Colonic mucosa (tissue), 4 donors: ENCODE measurements at regions of chr6 and their contacts with region 1.

Region 1: GRCh38 chr6:134174672-134175198 is 122.3 kb upstream of the SLC2A12 start:
- DNase-seq: peak; percentile 96
- H3K4me3 ChIP-seq: peak overlapping the region; percentile 60
- H3K27ac ChIP-seq: peak overlapping the region; percentile 81
- H3K4me1 ChIP-seq: no peaks in the 10 kb centered on the region
- H3K27me3 ChIP-seq: no peaks in the 10 kb centered on the region
- CTCF ChIP-seq: no peak

Region 2: GRCh38 chr6:133991096-133991593 is 183.6 kb before region 1 on chr6:
- intact Hi-C with region 1: no loop called
- DNase-seq: no peak
- H3K4me3 ChIP-seq: no peak overlapping the region
- H3K27ac ChIP-seq: no peak overlapping the region
- H3K4me1 ChIP-seq: no peaks in the 10 kb centered on the region
- H3K27me3 ChIP-seq: no peaks in the 10 kb centered on the region
- CTCF ChIP-seq: no peak

Region 3: GRCh38 chr6:134002821-134003220 is 171.9 kb before region 1 on chr6:
- intact Hi-C with region 1: no loop called
- DNase-seq: no peak
- H3K4me3 ChIP-seq: no peak overlapping the region
- H3K27ac ChIP-seq: no peak overlapping the region
- H3K4me1 ChIP-seq: no peaks in the 10 kb centered on the region
- H3K27me3 ChIP-seq: no peaks in the 10 kb centered on the region
- CTCF ChIP-seq: no peak

Region 4: GRCh38 chr6:134117370-134117807 is 57.3 kb before region 1 on chr6:
- intact Hi-C with region 1: no loop called
- DNase-seq: no peak
- H3K4me3 ChIP-seq: no peak overlapping the region
- H3K27ac ChIP-seq: no peak overlapping the region
- H3K4me1 ChIP-seq: no peaks in the 10 kb centered on the region
- H3K27me3 ChIP-seq: no peaks in the 10 kb centered on the region
- CTCF ChIP-seq: no peak

Region 5: DNA sequence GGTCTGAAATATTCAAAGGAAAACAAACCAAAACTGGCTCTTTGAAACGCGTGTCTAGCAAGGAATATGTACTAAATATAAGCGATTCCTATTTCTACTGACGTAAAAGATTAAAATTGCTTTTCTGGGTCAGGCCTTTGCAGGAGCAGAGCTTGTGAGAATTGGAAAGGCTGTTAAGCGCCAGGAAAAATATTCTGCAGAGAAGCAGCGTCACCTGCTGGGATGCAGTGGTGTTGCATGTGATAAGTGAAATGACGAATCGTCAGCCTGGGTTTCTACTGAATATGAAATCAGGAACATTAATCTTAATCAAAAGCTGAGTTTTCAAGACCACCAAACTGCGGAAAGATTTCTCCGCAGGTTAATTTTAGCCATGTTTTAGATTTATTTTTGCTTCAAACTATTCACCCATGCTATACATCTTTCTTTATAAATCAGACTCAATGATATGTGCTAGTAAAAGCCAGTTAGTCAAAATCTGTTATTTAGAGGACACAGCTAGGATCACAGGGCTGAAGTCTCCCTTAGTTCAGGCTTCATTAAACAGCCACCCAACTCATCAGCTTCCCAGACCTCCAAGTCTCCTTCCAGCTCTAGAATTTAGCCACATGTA is 707.8 kb after region 1 on chr6:
- intact Hi-C with region 1: loop called (anchors 5 kb)
- DNase-seq: peak; percentile 41
- H3K4me3 ChIP-seq: no peak overlapping the region
- H3K27ac ChIP-seq: no peak overlapping the region
- H3K4me1 ChIP-seq: no peaks in the 10 kb centered on the region
- H3K27me3 ChIP-seq: no peaks in the 10 kb centered on the region
- CTCF ChIP-seq: peak; percentile 97